ENCODE measurements at regions of chr10 and their contacts with region 1.

Region 1: GRCh38 chr10:79195091-79195923 is 126.5 kb downstream of the ZMIZ1 start:
- DNase-seq: peak; percentile 79
- H3K4me3 ChIP-seq: no peak overlapping the region
- H3K27ac ChIP-seq: no peak overlapping the region
- H3K4me1 ChIP-seq: peaks cover 37% of the 10 kb centered on the region
- H3K27me3 ChIP-seq: no peaks in the 10 kb centered on the region
- CTCF ChIP-seq: peak; percentile 85 to 96

Region 2: GRCh38 chr10:78211561-78212051 is 983.7 kb before region 1 on chr10:
- CTCF ChIA-PET with region 1: no interaction called
- dilution Hi-C with region 1: loop called (anchors 10 kb)
- in situ Hi-C with region 1: no loop called
- intact Hi-C with region 1: loop called (anchors 1 kb)
- DNase-seq: peak; percentile 11
- H3K4me3 ChIP-seq: no peak overlapping the region
- H3K27ac ChIP-seq: no peak overlapping the region
- H3K4me1 ChIP-seq: no peaks in the 10 kb centered on the region
- H3K27me3 ChIP-seq: no peaks in the 10 kb centered on the region
- CTCF ChIP-seq: peak; percentile 31 to 69

Region 3: DNA sequence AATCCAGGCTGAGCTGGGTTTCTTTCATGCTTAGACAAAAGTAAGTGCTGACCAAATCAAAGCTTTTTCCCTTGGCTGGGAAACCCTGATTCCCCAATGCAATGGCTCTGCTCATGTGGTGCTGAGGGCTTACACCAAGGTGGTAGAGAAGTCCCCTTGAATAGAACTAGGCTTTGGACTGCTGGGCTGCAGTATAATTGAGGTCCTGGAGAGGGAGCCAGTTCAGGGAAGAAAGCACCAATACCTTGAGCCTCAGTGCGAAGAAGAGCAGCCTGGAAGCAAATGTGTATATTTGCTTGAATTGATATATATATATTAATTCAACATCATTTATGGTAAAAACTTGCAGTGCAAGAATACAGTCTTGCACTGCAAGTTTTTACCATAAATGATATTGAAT is 770.6 kb before region 1 on chr10:
- CTCF ChIA-PET with region 1: no interaction called
- dilution Hi-C with region 1: no loop called
- in situ Hi-C with region 1: no loop called
- intact Hi-C with region 1: loop called (anchors 10 kb)
- DNase-seq: no peak
- H3K4me3 ChIP-seq: no peak overlapping the region
- H3K27ac ChIP-seq: no peak overlapping the region
- H3K4me1 ChIP-seq: no peaks in the 10 kb centered on the region
- H3K27me3 ChIP-seq: peaks cover 5% of the 10 kb centered on the region
- CTCF ChIP-seq: peak; percentile 23 to 44

Region 4: DNA sequence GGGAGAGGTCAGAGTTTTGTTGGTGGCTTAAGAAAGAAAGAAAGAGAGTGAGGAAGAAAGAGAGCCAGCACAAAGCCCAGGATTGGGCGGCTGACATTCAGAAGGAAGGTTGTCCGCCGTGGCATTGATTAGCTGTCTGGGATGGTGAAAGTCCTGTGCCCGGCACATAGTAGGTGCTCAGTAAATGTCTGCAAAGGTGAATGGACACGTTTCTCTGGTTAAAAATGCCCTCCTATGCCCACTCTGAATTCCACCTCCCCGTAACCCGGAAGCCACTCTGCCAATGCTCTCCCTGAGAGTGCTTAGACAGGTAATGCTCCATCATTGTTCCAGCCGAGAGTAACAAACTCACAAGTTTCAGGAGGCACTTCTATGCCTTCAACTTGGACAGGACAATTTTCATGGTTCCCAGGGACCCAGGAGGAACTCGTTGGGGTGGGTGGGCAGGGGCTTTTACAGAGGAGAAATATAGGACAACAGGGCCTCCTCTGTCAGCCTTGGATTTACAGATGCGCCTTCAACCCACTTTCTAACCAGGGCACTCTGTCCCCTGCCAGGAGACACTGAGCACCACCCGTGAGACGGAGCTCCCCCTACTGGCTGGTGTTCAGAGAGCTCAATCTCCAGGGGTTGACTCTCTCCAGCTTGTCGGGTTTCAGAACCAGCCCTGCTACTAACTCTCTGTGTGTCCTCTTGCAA is 538.0 kb before region 1 on chr10:
- CTCF ChIA-PET with region 1: interaction called, 3 read pairs
- dilution Hi-C with region 1: no loop called
- in situ Hi-C with region 1: loop called in 1 of 2 experiments (anchors 10 kb)
- intact Hi-C with region 1: loop called (anchors 1 kb)
- DNase-seq: peak; percentile 37
- H3K4me3 ChIP-seq: no peak overlapping the region
- H3K27ac ChIP-seq: no peak overlapping the region
- H3K4me1 ChIP-seq: no peaks in the 10 kb centered on the region
- H3K27me3 ChIP-seq: no peaks in the 10 kb centered on the region
- CTCF ChIP-seq: peak; percentile 78 to 95

Region 5: DNA sequence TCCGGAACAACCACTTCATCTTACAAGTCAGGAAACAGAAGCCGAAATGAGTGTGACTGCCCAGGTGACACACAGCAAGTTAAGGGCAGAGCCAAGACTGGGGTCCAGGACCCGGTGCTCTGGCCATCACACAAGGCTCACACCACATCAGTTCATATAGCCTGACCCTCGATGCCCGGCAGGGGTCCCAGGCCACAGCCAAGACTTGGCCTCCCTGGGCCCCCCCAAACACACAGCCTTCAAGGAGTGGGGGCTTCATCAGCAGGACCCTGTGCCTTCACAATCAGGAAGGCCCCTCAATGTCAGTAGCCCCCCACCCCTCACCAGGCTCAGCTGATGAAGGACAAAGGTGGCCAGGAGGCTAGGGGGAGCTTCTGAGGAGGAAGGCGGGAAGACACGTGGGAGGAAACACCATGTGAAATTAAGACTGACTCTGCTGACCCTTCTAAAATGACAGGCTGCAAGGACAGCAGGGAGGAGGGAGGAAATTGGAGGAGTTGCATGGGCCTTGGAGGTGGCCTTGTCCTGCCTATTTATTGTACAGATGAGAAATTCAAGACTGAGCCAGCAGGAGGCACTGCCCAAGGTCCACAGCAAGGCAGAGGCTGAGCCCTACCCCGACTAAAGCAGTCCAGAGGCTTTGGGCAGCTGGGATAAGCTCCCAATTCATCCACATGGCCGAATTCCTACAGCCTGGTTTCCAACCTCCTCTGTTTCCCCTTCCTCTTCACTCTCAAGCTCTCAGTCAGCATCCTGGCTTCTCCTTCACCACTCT is 342.7 kb before region 1 on chr10:
- CTCF ChIA-PET with region 1: no interaction called
- dilution Hi-C with region 1: no loop called
- in situ Hi-C with region 1: no loop called
- intact Hi-C with region 1: loop called (anchors 1 kb)
- DNase-seq: no peak
- H3K4me3 ChIP-seq: no peak overlapping the region
- H3K27ac ChIP-seq: no peak overlapping the region
- H3K4me1 ChIP-seq: no peaks in the 10 kb centered on the region
- H3K27me3 ChIP-seq: no peaks in the 10 kb centered on the region
- CTCF ChIP-seq: peak; percentile 11 to 33

Region 6: DNA sequence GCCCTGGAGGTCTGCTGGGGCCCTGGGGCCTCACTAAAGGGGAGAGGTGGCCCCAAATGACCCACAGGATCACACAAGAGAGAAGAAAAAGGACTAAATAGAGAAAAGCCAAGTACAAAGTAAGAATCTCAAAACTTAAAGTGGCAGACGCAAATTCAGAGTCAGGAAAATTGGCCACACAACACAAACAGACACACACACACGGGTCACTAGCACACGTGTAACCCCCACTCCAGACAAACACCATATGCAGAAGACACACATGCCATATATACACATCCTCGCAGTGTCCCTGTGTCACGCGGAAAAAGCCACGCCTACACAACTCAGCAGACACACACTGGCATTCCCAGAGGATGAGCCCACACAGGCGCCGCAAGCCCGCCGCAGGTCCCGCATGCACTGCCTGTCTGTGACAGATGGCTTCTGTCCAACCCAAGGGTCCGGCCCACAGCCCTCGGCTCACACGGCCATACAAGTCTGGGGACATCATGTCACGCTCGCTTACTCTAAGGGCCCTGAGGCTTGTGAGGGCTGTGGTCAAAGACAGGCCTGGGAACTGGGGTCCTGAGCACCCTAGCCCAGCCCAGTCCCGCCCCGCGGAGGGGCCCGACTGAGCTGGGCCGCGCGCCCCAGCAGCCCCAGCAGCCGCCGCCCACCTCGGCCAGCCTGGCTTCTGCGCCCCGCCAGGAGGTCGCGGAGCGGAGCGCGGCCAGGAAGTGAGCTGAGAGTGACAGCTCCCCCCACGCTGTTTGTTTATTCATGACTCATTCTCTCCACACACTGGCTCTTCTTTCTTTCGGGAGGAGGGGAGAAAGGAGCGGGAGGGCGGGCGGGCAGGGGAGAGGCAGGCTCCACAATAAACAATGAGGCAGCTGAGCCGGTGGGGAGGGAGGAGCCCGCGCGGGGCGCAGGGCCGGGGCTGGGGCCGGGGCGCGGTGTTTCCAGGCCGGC is 222.1 kb before region 1 on chr10:
- CTCF ChIA-PET with region 1: no interaction called
- dilution Hi-C with region 1: no loop called
- in situ Hi-C with region 1: no loop called
- intact Hi-C with region 1: loop called (anchors 5 kb)
- DNase-seq: peak; percentile 84
- H3K4me3 ChIP-seq: peak overlapping the region; percentile 15 to 43 (median 37)
- H3K27ac ChIP-seq: peak overlapping the region; percentile 79
- H3K4me1 ChIP-seq: peaks cover 41% of the 10 kb centered on the region
- H3K27me3 ChIP-seq: no peaks in the 10 kb centered on the region
- CTCF ChIP-seq: no peak

Region 7: DNA sequence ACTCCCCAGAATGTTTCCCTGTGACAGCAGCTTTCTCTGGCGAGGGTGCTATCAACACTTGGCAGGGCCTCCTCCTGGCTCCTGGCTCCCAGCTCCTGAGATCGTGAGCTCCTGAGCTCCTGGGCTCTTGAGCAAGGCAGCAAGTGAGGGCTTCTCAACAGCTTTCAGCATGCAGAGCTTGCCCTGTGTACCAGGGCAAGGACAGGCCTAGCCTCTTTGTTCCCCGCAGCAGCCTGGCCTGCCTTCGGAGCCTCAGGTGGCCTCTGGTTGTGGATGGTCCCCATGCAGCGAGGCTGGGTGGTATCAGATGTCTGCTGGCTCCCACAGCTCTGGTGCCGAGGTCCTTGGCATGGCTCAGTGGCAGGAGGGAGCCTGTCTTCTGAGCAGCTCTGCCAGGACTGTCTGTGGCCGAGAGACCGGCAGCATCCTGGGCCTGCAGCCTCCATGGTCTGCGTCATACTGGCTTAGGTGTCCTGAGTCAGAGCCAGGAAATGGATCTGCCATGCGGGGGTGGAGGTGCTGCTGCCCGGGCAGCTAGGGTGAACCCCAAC is 82.4 kb before region 1 on chr10:
- CTCF ChIA-PET with region 1: no interaction called
- dilution Hi-C with region 1: loop called (anchors 5 kb)
- in situ Hi-C with region 1: no loop called
- intact Hi-C with region 1: loop called (anchors 1 kb)
- DNase-seq: peak; percentile 91
- H3K4me3 ChIP-seq: no peak overlapping the region
- H3K27ac ChIP-seq: peak overlapping the region; percentile 75
- H3K4me1 ChIP-seq: peaks cover 51% of the 10 kb centered on the region
- H3K27me3 ChIP-seq: no peaks in the 10 kb centered on the region
- CTCF ChIP-seq: no peak

Region 8: GRCh38 chr10:79483299-79483698 is 288.0 kb after region 1 on chr10:
- CTCF ChIA-PET with region 1: no interaction called
- dilution Hi-C with region 1: no loop called
- in situ Hi-C with region 1: no loop called
- intact Hi-C with region 1: no loop called
- DNase-seq: no peak
- H3K4me3 ChIP-seq: no peak overlapping the region
- H3K27ac ChIP-seq: no peak overlapping the region
- H3K4me1 ChIP-seq: peaks cover 13% of the 10 kb centered on the region
- H3K27me3 ChIP-seq: no peaks in the 10 kb centered on the region
- CTCF ChIP-seq: no peak

Measured in mammary epithelial cell (primary cell).